ENCODE measurements at regions of chr6 and their contacts with region 1.

Region 1: GRCh38 chr6:149316798-149317655 is 485 bp upstream of the TAB2 start:
- DNase-seq: peak; percentile 91
- H3K4me3 Mint-ChIP-seq: peak overlapping the region; percentile 95
- H3K27ac Mint-ChIP-seq: peak overlapping the region; percentile 85
- H3K4me1 Mint-ChIP-seq: peaks cover 44% of the 10 kb centered on the region
- H3K27me3 Mint-ChIP-seq: no peaks in the 10 kb centered on the region

Region 2: GRCh38 chr6:149082286-149082707 is 234.7 kb before region 1 on chr6:
- intact Hi-C with region 1: loop called (anchors 1 kb)
- DNase-seq: peak; percentile 79
- H3K4me3 Mint-ChIP-seq: no peak overlapping the region
- H3K27ac Mint-ChIP-seq: peak overlapping the region; percentile 77
- H3K4me1 Mint-ChIP-seq: peaks cover 79% of the 10 kb centered on the region
- H3K27me3 Mint-ChIP-seq: no peaks in the 10 kb centered on the region

Region 3: GRCh38 chr6:149140137-149140909 is 176.7 kb before region 1 on chr6:
- intact Hi-C with region 1: loop called (anchors 1 kb)
- DNase-seq: no peak
- H3K4me3 Mint-ChIP-seq: peak overlapping the region; percentile 84
- H3K27ac Mint-ChIP-seq: peak overlapping the region; percentile 100
- H3K4me1 Mint-ChIP-seq: peaks cover 46% of the 10 kb centered on the region
- H3K27me3 Mint-ChIP-seq: no peaks in the 10 kb centered on the region

Region 4: DNA sequence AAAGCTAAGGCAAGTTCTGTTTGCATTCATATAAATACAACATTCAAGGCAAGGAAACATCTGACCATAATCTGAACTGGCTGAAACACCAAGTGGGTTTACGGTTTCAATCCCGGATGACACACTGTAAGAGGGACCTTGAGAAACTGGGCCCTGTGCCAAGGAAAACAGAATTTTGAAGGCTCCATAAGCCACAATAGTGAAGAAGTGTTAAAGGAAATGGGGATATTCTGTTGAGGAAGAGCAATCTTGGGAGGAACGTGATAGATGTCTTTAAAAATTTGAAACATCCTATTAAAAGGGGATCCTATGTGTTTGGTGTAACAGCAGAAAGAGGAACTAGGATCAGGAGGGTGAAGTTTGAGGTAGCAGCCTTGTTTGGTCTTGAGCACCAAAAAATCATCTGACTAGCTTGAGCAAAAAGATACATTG is 81.9 kb before region 1 on chr6:
- intact Hi-C with region 1: loop called (anchors 1 kb)
- DNase-seq: no peak
- H3K4me3 Mint-ChIP-seq: no peak overlapping the region
- H3K27ac Mint-ChIP-seq: peak overlapping the region; percentile 99
- H3K4me1 Mint-ChIP-seq: peaks cover 60% of the 10 kb centered on the region
- H3K27me3 Mint-ChIP-seq: no peaks in the 10 kb centered on the region

Region 5: DNA sequence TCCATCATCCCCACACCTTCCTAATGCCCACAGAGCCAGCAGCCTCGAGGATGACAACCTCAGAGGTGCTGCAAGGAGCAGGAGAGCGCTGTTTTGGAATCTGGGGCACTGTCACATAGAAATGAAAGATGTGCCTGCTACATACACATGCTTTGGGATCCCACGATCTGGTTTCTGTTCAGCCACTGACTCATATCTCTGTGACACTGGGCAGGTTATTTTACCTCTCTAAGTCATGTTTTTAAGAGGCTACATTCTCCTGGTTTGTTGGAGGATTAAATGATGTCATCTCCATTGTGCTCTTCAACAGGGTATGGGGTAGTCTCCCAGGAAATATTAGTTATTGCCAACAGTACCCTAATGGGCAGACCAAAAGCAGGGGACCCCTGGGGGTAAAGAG is 32.1 kb before region 1 on chr6:
- intact Hi-C with region 1: loop called (anchors 2 kb)
- DNase-seq: no peak
- H3K4me3 Mint-ChIP-seq: no peak overlapping the region
- H3K27ac Mint-ChIP-seq: peak overlapping the region; percentile 20
- H3K4me1 Mint-ChIP-seq: peaks cover 28% of the 10 kb centered on the region
- H3K27me3 Mint-ChIP-seq: no peaks in the 10 kb centered on the region

Region 6: GRCh38 chr6:149366267-149366921 is 49.4 kb after region 1 on chr6:
- intact Hi-C with region 1: loop called (anchors 2 kb)
- DNase-seq: no peak
- H3K4me3 Mint-ChIP-seq: peak overlapping the region; percentile 20
- H3K27ac Mint-ChIP-seq: no peak overlapping the region
- H3K4me1 Mint-ChIP-seq: peaks cover 47% of the 10 kb centered on the region
- H3K27me3 Mint-ChIP-seq: no peaks in the 10 kb centered on the region

Region 7: DNA sequence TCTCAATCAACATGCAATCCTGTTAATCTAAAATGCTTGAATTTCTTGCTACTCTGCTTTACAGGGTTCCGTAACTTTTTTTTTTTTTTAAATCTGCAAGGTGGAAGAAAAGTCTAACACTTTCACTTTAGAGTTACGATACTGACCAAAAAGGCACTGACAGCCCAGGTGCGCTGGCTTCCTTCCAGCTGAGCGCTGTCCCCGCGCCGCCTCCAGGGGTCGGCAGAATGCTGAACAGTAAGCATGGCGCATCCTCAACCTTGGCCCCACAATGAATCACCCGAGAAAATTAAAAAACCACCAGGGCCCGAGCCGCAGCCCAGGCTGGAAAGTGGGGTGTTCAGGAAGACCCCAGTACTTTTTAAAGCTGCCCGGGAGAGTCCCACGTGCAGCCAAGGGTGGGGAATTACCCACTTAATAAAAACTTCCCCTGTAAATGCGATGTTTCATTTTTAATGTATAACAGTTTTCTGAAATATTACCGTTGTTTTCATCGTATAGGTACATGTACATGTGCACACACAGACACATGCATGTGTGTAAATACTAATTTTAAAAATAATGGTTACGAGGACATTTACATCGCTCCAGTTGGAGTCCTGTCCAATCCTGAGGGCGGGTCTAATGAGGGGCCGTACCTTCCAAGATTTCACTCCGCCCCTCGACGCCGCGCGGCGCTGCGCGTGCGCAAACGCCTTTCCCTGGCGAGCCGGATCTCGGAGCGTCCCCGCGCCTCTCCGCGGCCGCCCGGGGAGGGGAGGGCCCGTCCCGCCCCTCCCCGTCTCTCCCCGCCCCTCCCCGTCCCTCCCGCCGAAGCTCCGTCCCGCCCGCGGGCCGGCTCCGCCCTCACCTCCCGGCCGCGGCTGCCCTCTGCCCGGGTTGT is 248.7 kb after region 1 on chr6 and contains the start of gene GINM1:
- intact Hi-C with region 1: loop called (anchors 5 kb)
- DNase-seq: peak; percentile 96
- H3K4me3 Mint-ChIP-seq: peak within 1 kb of the TSS; percentile 89
- H3K27ac Mint-ChIP-seq: peak within 1 kb of the TSS; percentile 86
- H3K4me1 Mint-ChIP-seq: peaks cover 12% of the 10 kb centered on the region
- H3K27me3 Mint-ChIP-seq: peaks cover 4% of the 10 kb centered on the region
- total RNA-seq, gene GINM1: 17.6 and 19.0 TPM in 2 replicates

Measured in activated T-helper 2 cell treated with anti-CD3 and anti-CD28 coated beads, Interferon-gamma antibody, Interleukin-2, Interleukin-4, amounts not matched to agents 10 μg/mL and 5 μg/mL and 100 μg/mL, durations not matched to agents 14 hours and 24 hours and 36 hours (primary cell).